RWPE1 (cell line): ENCODE measurements at regions of chr15 and their contacts with region 1.

Region 1: GRCh38 chr15:74438721-74439316 is 5.1 kb upstream of the SEMA7A start:
- DNase-seq: peak; percentile 78
- H3K27ac ChIP-seq: no peak overlapping the region
- CTCF ChIP-seq: peak; percentile 98

Region 2: GRCh38 chr15:74373731-74374647 is 64.8 kb before region 1 on chr15:
- CTCF ChIA-PET with region 1: interaction called, 10 read pairs
- POLR2A ChIA-PET with region 1: no interaction called
- DNase-seq: peak; percentile 99
- H3K27ac ChIP-seq: peak overlapping the region; percentile 66
- CTCF ChIP-seq: peak; percentile 90

Region 3: GRCh38 chr15:74382004-74382816 is 56.6 kb before region 1 on chr15:
- CTCF ChIA-PET with region 1: interaction called, 29 read pairs
- POLR2A ChIA-PET with region 1: no interaction called
- DNase-seq: peak; percentile 93
- H3K27ac ChIP-seq: peak overlapping the region; percentile 47
- CTCF ChIP-seq: peak; percentile 89

Region 4: GRCh38 chr15:74460871-74461846 is 22.3 kb after region 1 on chr15 and contains the start of gene UBL7:
- CTCF ChIA-PET with region 1: interaction called, 10 read pairs
- POLR2A ChIA-PET with region 1: no interaction called
- DNase-seq: peak; percentile 96
- H3K27ac ChIP-seq: peak within 1 kb of the TSS; percentile 89
- CTCF ChIP-seq: peak; percentile 27